ENCODE measurements at regions of chr2 and their contacts with region 1.

Region 1: GRCh38 chr2:199973703-199974102 is 18.3 kb downstream of the MAIP1 start:
- DNase-seq: no peak
- ATAC-seq: peak in 4 of 8 donors; percentile 28 to 66 (median 46)
- H3K4me3 ChIP-seq: no peak overlapping the region
- H3K27ac ChIP-seq: no peak overlapping the region
- H3K4me1 ChIP-seq: peaks cover 0 to 3% (median 0%) of the 10 kb centered on the region in 9 donors
- H3K27me3 ChIP-seq: no peaks in the 10 kb centered on the region
- CTCF ChIP-seq: peak; percentile 11 to 61 (median 50)

Region 2: GRCh38 chr2:200026332-200027230 is 52.9 kb after region 1 on chr2:
- intact Hi-C with region 1: no loop called
- DNase-seq: peak in 1 of 2 donors; percentile 22
- ATAC-seq: peak in 7 of 8 donors; percentile 35 to 85 (median 72)
- H3K4me3 ChIP-seq: no peak overlapping the region
- H3K27ac ChIP-seq: peak overlapping the region in 9 of 10 donors; percentile 3 to 87 (median 60)
- H3K4me1 ChIP-seq: peaks cover 0 to 22% (median 4%) of the 10 kb centered on the region in 9 donors
- H3K27me3 ChIP-seq: no peaks in the 10 kb centered on the region
- CTCF ChIP-seq: no peak

Region 3: DNA sequence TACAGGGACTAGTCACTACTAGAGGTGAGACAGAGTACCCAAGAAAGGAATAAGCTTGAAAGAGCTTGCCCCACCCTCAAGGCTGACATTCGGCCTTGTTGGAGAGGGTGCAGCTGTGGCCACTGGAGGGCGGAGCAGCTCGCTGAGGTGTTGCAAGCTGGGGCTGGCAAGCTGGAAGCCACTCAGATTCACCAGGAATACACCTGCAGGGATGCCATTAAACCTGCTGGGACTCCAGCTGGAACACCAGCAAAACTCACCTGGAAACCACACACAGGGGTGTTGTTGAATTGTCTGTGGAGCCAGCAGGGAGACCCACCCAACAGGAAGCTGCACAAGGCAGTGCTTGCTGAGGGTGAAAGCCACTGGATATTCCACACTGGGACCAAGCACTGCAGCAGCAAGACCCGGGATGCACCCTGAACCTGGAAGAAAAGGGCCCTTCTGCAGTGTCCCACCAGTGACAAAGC is 510.1 kb after region 1 on chr2:
- intact Hi-C with region 1: loop called in 1 of 10 experiments (anchors 2 kb)
- DNase-seq: no peak
- ATAC-seq: peak in 2 of 8 donors; percentile 29 to 36
- H3K4me3 ChIP-seq: no peak overlapping the region
- H3K27ac ChIP-seq: no peak overlapping the region
- H3K4me1 ChIP-seq: peaks cover 0 to 5% (median 0%) of the 10 kb centered on the region in 9 donors
- H3K27me3 ChIP-seq: no peaks in the 10 kb centered on the region
- CTCF ChIP-seq: peak in 7 of 9 donors; percentile 12 to 47 (median 28)